ENCODE measurements at regions of chr4 and their contacts with region 1.

Region 1: DNA sequence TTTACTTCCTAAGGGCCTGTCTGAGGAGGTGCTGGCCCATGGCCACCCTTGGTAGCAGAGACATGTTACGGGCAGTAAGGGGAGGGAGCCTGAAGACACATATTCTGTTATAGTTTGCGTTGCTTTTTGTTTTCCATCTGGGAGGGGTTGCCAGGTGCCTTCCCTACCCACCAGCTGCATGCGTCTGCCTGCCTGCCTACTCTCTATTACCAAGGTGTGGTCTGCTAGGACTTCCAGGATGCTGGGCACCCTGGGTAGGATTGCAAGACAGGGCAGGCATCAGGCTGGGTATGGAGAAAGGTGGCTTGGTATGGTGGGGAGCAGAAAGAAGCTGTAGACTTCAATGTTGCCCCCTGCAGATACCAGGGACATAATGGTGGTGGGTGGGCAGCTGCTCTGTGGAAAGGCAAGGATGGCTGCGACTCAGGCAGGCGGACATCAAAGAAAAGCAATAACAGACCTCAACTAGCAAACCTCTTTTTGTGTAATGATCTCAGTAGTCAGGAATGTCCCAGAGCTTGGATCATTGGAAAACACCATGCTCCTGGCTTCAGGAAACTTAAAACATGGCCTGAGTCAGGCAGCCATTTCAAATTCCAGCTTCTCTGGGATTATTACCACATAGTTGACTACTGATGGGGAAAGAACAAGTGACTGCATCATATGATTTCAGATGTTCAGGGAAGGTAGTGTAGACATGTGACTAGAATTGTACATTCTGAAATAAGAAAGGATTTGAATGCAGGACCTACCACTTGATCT is 67.8 kb downstream of the HOPX start:
- DNase-seq: peak; percentile 53
- H3K4me3 Mint-ChIP-seq: no peak overlapping the region
- H3K27ac Mint-ChIP-seq: peak overlapping the region; percentile 88
- H3K4me1 Mint-ChIP-seq: peaks cover 14% of the 10 kb centered on the region
- H3K27me3 Mint-ChIP-seq: no peaks in the 10 kb centered on the region
- CTCF ChIP-seq: no peak

Region 2: GRCh38 chr4:56348576-56348975 is 264.7 kb before region 1 on chr4:
- CTCF ChIA-PET with region 1: no interaction called
- POLR2A ChIA-PET with region 1: no interaction called
- intact Hi-C with region 1: no loop called
- DNase-seq: no peak
- H3K4me3 Mint-ChIP-seq: no peak overlapping the region
- H3K27ac Mint-ChIP-seq: no peak overlapping the region
- H3K4me1 Mint-ChIP-seq: no peaks in the 10 kb centered on the region
- H3K27me3 Mint-ChIP-seq: no peaks in the 10 kb centered on the region
- CTCF ChIP-seq: no peak

Region 3: DNA sequence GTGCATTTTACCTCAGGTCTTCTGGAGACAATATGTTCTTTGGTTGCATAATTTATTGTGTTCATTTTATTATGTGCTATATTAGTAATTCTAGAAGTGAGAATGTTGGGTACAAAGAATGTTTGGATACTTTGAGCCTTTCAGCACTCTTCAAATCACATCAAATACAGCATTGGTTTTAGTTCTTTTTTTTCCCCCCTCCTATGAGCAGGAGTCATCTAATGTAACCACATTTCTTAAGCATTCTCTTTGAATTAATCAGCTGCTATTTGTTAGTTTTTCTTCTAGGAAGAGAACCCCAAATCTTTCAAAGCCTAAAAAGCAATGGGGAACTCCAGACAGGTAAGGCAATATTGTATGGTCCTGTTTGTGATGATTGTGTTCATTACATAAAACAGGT is 61.0 kb before region 1 on chr4:
- CTCF ChIA-PET with region 1: no interaction called
- POLR2A ChIA-PET with region 1: no interaction called
- intact Hi-C with region 1: no loop called
- DNase-seq: no peak
- H3K4me3 Mint-ChIP-seq: no peak overlapping the region
- H3K27ac Mint-ChIP-seq: no peak overlapping the region
- H3K4me1 Mint-ChIP-seq: no peaks in the 10 kb centered on the region
- H3K27me3 Mint-ChIP-seq: no peaks in the 10 kb centered on the region
- CTCF ChIP-seq: no peak

Region 4: GRCh38 chr4:56575820-56576429 is 37.4 kb before region 1 on chr4:
- CTCF ChIA-PET with region 1: interaction called, 13 read pairs
- POLR2A ChIA-PET with region 1: no interaction called
- intact Hi-C with region 1: no loop called
- DNase-seq: peak; percentile 45
- H3K4me3 Mint-ChIP-seq: no peak overlapping the region
- H3K27ac Mint-ChIP-seq: no peak overlapping the region
- H3K4me1 Mint-ChIP-seq: no peaks in the 10 kb centered on the region
- H3K27me3 Mint-ChIP-seq: no peaks in the 10 kb centered on the region
- CTCF ChIP-seq: peak; percentile 36

Measured in MCF 10A (cell line).